ENCODE measurements at regions of chr1 and their contacts with region 1.

Region 1: GRCh38 chr1:209207701-209208286 is 375.7 kb upstream of the CAMK1G start:
- DNase-seq: peak; percentile 57 to 97 (median 78)

Region 2: DNA sequence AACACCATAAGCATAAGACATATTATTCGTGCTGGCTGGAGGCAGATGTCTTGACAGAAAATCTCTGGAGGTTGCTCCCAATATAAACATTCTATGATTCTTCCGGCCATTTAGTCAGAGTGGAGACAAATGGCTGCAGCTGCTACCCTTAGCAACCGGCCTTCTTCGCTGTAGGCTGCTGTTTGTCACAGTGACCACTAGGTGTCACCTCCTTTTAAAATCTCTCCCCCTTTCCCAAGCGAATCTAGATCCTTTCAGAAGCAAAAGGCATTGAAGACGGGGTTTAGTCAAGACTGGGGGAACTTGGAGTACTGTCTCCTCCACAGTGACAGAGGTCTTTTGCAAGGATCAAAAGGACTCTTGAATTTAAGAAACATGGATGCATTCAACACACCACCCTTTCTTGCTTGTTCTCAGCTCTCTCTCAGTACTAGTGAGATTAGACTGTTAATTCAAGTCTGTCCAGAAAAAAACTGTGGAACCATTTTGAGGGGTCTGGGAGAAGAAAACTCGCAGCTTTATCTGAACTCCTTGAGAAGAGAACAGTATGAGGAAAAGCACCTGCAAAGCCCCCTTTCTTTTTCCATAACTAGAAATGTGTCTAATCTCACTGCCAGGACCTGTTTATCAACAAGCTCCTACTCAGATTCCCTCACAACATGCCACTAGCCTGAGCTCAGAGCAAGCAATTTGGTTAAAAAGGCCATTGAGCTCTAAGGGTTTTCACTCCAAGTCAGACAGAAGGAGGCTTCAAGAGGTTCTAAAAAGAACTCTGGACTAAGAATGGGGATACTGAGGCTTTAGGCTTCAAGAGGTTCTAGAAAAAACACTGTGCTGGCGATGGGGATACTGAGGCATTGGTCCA is 555.3 kb before region 1 on chr1:
- intact Hi-C with region 1: loop called (anchors 2 kb)
- DNase-seq: peak; percentile 34 to 90 (median 50)

Region 3: GRCh38 chr1:208807446-208808127 is 400.2 kb before region 1 on chr1:
- intact Hi-C with region 1: no loop called
- DNase-seq: no peak

Region 4: GRCh38 chr1:209248649-209249279 is 41.0 kb after region 1 on chr1:
- intact Hi-C with region 1: loop called (anchors 2 kb)
- DNase-seq: peak in 4 of 10 donors; percentile 26 to 49 (median 46)

Region 5: GRCh38 chr1:209354111-209354839 is 146.5 kb after region 1 on chr1:
- intact Hi-C with region 1: loop called (anchors 5 kb)
- DNase-seq: peak; percentile 56 to 96 (median 79)

Region 6: DNA sequence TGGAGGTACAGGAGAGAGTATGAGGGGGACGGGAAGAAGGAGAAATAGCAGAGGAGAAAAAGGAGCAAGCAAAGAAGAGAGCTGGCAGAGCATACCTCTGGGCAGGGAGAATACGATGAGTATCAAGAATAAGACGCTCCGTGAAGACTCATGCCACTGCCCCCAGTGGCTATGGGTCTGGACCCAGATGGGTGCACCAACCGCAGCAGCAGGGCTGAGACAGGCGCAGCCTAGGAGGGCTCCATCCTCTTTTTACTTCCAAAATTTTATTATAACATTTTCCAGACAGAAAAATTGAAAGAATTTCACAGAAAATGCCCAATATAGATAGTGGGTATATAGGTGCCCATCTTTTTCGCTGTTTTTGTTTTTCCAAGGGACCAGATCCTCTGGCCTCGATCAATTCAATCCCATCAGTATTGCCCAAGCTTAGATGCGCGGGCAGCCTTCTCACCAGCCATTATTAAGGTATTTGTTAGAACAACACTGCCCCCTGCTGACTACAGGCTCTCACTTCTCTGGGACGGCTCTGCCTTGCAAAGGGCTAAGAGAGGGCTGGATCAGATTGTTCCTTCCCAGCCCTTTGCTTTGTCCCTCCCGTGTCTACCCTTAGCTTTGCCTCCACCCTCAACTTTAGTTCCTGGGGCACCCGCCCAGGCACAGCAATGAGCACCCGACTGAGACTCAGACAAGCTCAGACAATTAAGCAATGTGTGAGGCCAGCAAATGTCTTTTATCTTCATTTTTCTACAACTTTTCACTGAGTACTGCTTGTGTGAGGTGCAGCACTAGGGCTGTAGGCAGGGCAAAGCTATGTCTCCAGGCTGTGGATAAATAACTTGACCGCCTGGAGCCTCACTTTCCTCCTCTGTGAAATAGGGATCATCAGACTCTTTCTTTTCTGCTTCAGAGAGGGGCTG is 358.2 kb after region 1 on chr1:
- intact Hi-C with region 1: loop called (anchors 2 kb)
- DNase-seq: peak; percentile 66 to 96 (median 83)